ENCODE measurements at regions of chr9 and their contacts with region 1.

Region 1: GRCh38 chr9:100322954-100323536 is 29.7 kb downstream of the TEX10 start:
- DNase-seq: peak in 1 of 2 experiments; percentile 7
- H3K4me3 ChIP-seq: no peak overlapping the region
- H3K27ac ChIP-seq: no peak overlapping the region
- H3K4me1 ChIP-seq: no peaks in the 10 kb centered on the region
- H3K27me3 ChIP-seq: no peaks in the 10 kb centered on the region
- CTCF ChIP-seq: peak in 2 of 3 experiments; percentile 46 to 68; a peak in 2 of 4 replicates
- EP300 ChIP-seq: no peak
- POLR2A ChIP-seq: no peak
- RAD21 ChIP-seq: peak; percentile 45 to 55

Region 2: GRCh38 chr9:100222674-100223073 is 100.4 kb before region 1 on chr9:
- CTCF ChIA-PET with region 1: interaction called, 10 read pairs
- POLR2A ChIA-PET with region 1: no interaction called
- DNase-seq: no peak
- H3K4me3 ChIP-seq: no peak overlapping the region
- H3K27ac ChIP-seq: no peak overlapping the region
- H3K4me1 ChIP-seq: no peaks in the 10 kb centered on the region
- H3K27me3 ChIP-seq: no peaks in the 10 kb centered on the region
- CTCF ChIP-seq: peak in 2 of 3 experiments; percentile 15 to 26; a peak in 2 of 4 replicates
- EP300 ChIP-seq: no peak
- POLR2A ChIP-seq: no peak
- RAD21 ChIP-seq: peak; percentile 43 to 55

Region 3: GRCh38 chr9:100341889-100342288 is 18.8 kb after region 1 on chr9:
- CTCF ChIA-PET with region 1: interaction called, 29 read pairs
- POLR2A ChIA-PET with region 1: interaction called, 3 read pairs
- DNase-seq: no peak
- H3K4me3 ChIP-seq: no peak overlapping the region
- H3K27ac ChIP-seq: no peak overlapping the region
- H3K4me1 ChIP-seq: peaks cover 2 to 4% (median 3%) of the 10 kb centered on the region in 4 experiments; a peak in 5 of 7 replicates
- H3K27me3 ChIP-seq: no peaks in the 10 kb centered on the region
- CTCF ChIP-seq: no peak
- EP300 ChIP-seq: no peak
- POLR2A ChIP-seq: no peak
- RAD21 ChIP-seq: no peak

Measured in H1 (cell line).